Activated CD4-positive, alpha-beta memory T cell treated with anti-CD3 and anti-CD28 coated beads for 36 hours (primary cell): ENCODE measurements at regions of chr18 and their contacts with region 1.

Region 1: DNA sequence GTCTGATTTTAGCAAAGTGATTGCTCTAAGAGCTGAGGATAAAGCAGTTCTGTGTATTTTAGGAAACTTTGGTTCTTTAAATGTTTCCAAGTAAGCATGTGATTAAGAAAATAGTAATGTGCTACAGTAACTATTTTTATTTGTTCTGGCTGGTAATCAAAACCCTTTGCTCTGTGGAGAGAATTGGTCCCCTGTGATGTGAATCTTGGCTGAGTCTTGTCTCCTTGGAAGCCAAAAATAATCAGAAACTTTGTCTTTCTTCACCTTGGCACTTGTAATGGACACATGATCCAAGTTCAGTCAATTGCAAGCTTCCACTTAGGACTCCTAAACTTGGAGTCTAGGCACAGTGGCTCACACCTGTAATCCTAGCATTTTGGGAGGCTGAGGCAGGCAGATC is 422.7 kb upstream of the CDH20 start:
- DNase-seq: no peak
- H3K4me3 Mint-ChIP-seq: no peak overlapping the region
- H3K27ac Mint-ChIP-seq: no peak overlapping the region
- H3K4me1 Mint-ChIP-seq: no peaks in the 10 kb centered on the region
- H3K27me3 Mint-ChIP-seq: no peaks in the 10 kb centered on the region

Region 2: DNA sequence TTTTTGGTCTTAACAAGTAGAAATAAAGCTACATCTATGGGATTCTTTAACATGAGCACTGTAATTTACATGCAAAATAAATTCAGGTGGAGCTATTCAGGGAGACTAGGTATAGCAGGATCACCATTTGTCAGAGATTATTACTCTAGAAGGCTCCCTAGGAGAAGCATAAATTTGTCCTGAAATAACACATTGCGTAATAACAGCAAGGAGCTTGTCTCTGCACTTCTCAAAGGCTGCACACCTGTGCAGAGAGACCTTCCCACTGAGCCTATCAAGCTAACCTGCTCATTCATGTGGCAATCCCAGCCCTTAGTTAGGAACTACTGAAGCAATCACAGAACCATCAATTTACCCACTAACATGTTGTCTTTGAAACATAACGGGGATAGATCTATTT is 100.6 kb before region 1 on chr18:
- CTCF ChIA-PET with region 1: no interaction called
- POLR2A ChIA-PET with region 1: no interaction called
- intact Hi-C with region 1: loop called (anchors 10 kb)
- DNase-seq: no peak
- H3K4me3 Mint-ChIP-seq: no peak overlapping the region
- H3K27ac Mint-ChIP-seq: no peak overlapping the region
- H3K4me1 Mint-ChIP-seq: no peaks in the 10 kb centered on the region
- H3K27me3 Mint-ChIP-seq: no peaks in the 10 kb centered on the region

Region 3: DNA sequence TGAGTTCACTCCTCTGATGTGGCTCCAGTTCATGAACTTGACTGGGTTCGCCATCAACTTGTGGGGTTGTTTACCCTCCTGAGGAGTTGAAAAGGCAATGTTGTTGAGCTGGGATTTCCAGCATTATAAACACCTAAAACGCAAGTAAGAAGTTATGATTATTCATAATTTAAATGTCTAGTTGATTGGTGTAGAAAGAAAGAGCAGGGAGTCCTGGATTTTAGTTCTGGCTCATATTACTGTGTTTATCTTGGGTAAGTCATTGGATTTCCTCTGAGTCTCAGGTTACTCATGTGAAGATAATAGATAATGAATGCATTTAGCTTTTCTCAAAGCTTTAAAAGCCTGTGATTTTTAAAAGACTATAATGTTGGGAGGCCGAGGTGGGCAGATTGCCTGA is 15.3 kb before region 1 on chr18:
- CTCF ChIA-PET with region 1: no interaction called
- POLR2A ChIA-PET with region 1: no interaction called
- intact Hi-C with region 1: no loop called
- DNase-seq: no peak
- H3K4me3 Mint-ChIP-seq: no peak overlapping the region
- H3K27ac Mint-ChIP-seq: no peak overlapping the region
- H3K4me1 Mint-ChIP-seq: no peaks in the 10 kb centered on the region
- H3K27me3 Mint-ChIP-seq: no peaks in the 10 kb centered on the region